PC-9 (cell line): ENCODE measurements at regions of chr11 and their contacts with region 1.

Region 1: GRCh38 chr11:103471546-103471945 is 362.3 kb downstream of the DYNC2H1 start:
- DNase-seq: no peak
- H3K4me3 ChIP-seq: no peak overlapping the region
- H3K27ac ChIP-seq: no peak overlapping the region
- H3K4me1 ChIP-seq: no peaks in the 10 kb centered on the region
- H3K27me3 ChIP-seq: no peaks in the 10 kb centered on the region
- CTCF ChIP-seq: no peak

Region 2: GRCh38 chr11:103364687-103365086 is 106.9 kb before region 1 on chr11:
- CTCF ChIA-PET with region 1: no interaction called
- POLR2A ChIA-PET with region 1: interaction called, 16 read pairs
- intact Hi-C with region 1: no loop called
- DNase-seq: no peak
- H3K4me3 ChIP-seq: no peak overlapping the region
- H3K27ac ChIP-seq: no peak overlapping the region
- H3K4me1 ChIP-seq: no peaks in the 10 kb centered on the region
- H3K27me3 ChIP-seq: no peaks in the 10 kb centered on the region
- CTCF ChIP-seq: no peak